AG04450 (cell line): ENCODE measurements at regions of chr7 and their contacts with region 1.

Region 1: GRCh38 chr7:6577365-6578113 is at the start of gene ZDHHC4:
- DNase-seq: peak; percentile 61
- H3K4me3 ChIP-seq: peak within 1 kb of the TSS; percentile 76
- H3K27ac ChIP-seq: peak within 1 kb of the TSS; percentile 82
- H3K27me3 ChIP-seq: no peaks in the 10 kb centered on the region
- CTCF ChIP-seq: no peak
- polyA plus RNA-seq, gene ZDHHC4: 99.4 and 103 TPM in 2 replicates

Region 2: GRCh38 chr7:6516387-6516983 is 61.1 kb before region 1 on chr7:
- CTCF ChIA-PET with region 1: interaction called, 22 read pairs
- POLR2A ChIA-PET with region 1: no interaction called
- DNase-seq: peak; percentile 55
- H3K4me3 ChIP-seq: no peak overlapping the region
- H3K27ac ChIP-seq: no peak overlapping the region
- H3K27me3 ChIP-seq: no peaks in the 10 kb centered on the region
- CTCF ChIP-seq: peak; percentile 91

Region 3: DNA sequence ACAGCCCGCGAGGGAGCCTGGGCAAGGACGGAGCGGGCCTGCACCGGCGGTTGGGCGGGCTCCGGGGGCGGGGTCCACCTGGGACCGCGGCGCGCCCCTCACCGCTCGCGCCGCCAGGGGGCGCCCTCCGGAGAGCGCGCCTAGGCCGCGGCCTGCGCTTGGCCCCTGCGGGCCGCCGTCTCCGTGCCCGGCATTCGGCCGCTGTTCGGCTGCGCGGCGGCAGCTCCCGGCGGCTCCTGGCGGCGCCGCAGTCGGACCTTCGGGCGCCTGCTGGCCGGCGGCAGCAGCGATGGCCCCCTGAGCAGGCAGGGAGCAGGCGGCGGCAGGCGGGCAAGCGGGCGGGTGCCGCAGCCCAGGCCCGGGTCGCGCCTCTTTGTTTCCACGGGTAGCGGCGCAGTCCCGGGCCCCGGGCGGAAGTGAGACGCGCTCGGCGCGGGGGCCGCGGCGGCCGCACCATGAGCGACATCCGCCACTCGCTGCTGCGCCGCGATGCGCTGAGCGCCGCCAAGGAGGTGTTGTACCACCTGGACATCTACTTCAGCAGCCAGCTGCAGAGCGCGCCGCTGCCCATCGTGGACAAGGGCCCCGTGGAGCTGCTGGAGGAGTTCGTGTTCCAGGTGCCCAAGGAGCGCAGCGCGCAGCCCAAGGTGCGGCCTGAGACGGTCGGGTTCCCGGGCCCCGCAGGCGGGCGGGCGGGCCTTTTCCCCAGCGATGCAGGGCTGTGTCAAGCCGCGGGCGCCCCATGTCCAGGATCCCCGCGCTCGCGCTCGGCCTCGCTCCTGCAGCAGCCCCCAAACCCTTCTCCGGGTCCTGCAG is 12.5 kb after region 1 on chr7 and contains the start of gene INTS15:
- CTCF ChIA-PET with region 1: interaction called, 13 read pairs
- POLR2A ChIA-PET with region 1: interaction called, 5 read pairs
- DNase-seq: peak; percentile 39
- H3K4me3 ChIP-seq: peak within 1 kb of the TSS; percentile 95
- H3K27ac ChIP-seq: peak within 1 kb of the TSS; percentile 52
- H3K27me3 ChIP-seq: no peaks in the 10 kb centered on the region
- CTCF ChIP-seq: peak; percentile 34
- polyA plus RNA-seq, gene INTS15: 17.1 and 17.6 TPM in 2 replicates

Region 4: GRCh38 chr7:6600093-6600492 is 22.6 kb after region 1 on chr7:
- CTCF ChIA-PET with region 1: interaction called, 10 read pairs
- POLR2A ChIA-PET with region 1: no interaction called
- DNase-seq: no peak
- H3K4me3 ChIP-seq: no peak overlapping the region
- H3K27ac ChIP-seq: no peak overlapping the region
- H3K27me3 ChIP-seq: no peaks in the 10 kb centered on the region
- CTCF ChIP-seq: no peak

Region 5: GRCh38 chr7:7099584-7100014 is 522.1 kb after region 1 on chr7:
- CTCF ChIA-PET with region 1: no interaction called
- POLR2A ChIA-PET with region 1: no interaction called
- DNase-seq: peak; percentile 69
- H3K4me3 ChIP-seq: no peak overlapping the region
- H3K27ac ChIP-seq: no peak overlapping the region
- H3K27me3 ChIP-seq: no peaks in the 10 kb centered on the region
- CTCF ChIP-seq: no peak